ENCODE measurements at regions of chr2 and their contacts with region 1.

Region 1: DNA sequence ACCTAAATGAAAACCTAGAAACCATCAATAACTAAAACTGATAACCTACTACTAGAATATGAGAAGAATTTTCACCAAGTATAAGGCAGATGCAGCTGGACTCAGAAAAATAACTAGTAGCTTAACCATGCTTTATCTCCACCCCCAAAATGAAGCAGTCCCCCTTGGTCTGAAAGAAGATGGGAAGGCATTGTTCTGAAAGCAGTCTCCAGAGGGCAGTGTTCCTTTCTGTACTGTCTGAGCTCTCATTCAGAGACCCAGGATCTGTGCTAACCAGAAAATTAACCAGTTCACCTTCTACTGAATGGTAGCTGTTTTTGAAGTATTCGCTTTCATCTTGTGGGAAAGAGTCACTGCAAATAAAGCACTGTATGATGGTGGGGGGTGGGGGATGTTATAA is 273.0 kb downstream of the PDE11A start:
- DNase-seq: peak in 1 of 2 donors; percentile 6
- ATAC-seq: peak in 4 of 8 donors; percentile 61 to 66 (median 64)
- H3K4me3 ChIP-seq: no peak overlapping the region
- H3K27ac ChIP-seq: no peak overlapping the region
- H3K4me1 ChIP-seq: peaks cover 0 to 24% (median 7%) of the 10 kb centered on the region in 9 donors
- H3K27me3 ChIP-seq: peaks cover 0 to 8% (median 0%) of the 10 kb centered on the region in 7 donors
- CTCF ChIP-seq: peak in 8 of 9 donors; percentile 9 to 62 (median 28)

Region 2: DNA sequence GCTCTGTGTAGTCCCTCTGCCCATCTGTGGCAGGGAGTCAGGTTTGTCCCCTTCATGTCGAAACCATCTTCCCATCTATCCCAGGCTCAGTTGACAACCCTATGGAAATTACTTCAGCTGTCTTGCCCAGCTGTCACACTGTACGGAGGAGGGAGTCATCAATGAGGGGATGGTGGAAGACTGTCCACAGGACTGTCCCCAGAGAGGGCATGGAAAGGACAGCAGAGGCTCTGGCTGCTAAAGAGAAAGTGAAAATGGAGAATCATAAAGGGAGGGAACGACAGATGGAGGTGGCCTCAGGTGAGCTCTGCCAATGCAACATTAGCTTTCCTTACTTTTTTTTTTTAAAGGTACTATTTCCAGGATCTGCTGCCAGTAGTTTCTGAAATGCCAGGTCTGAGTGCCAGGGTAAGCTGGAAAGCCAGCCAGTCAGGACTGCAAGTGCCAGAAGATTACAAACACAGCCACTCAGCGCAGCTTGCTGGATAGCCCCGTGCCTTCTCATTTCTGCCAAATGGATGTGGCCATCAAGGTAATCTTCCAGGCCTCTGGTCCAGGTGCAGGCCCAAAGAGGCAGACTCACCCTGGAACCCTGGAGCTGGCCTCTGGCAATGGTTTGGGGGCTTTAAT is 214.2 kb before region 1 on chr2:
- intact Hi-C with region 1: no loop called
- DNase-seq: peak in 1 of 2 donors; percentile 30
- ATAC-seq: peak; percentile 61 to 92 (median 86)
- H3K4me3 ChIP-seq: no peak overlapping the region
- H3K27ac ChIP-seq: no peak overlapping the region
- H3K4me1 ChIP-seq: peaks cover 0 to 13% (median 0%) of the 10 kb centered on the region in 9 donors
- H3K27me3 ChIP-seq: no peaks in the 10 kb centered on the region
- CTCF ChIP-seq: no peak

Region 3: GRCh38 chr2:177842243-177842642 is 42.7 kb after region 1 on chr2:
- intact Hi-C with region 1: no loop called
- DNase-seq: no peak
- ATAC-seq: no peak
- H3K4me3 ChIP-seq: no peak overlapping the region
- H3K27ac ChIP-seq: no peak overlapping the region
- H3K4me1 ChIP-seq: no peaks in the 10 kb centered on the region
- H3K27me3 ChIP-seq: no peaks in the 10 kb centered on the region
- CTCF ChIP-seq: no peak

Region 4: DNA sequence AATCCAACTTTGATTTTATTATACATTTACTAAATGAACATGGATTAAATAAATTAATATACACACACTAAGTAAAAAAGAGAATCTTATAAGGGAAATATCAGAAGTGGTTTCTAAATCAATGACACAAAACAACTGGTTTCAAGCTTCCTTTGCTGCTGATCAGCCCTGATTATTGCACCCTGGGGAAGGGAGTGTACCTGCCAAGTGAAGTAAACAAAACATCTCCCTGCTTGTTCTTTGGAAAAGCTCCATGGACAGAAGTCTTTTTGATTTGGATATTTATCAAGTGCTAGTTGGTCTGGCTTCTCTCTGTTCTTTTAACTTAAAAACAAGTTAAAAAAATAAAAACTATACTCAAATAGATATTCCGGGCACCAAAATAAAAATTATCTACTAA is 83.0 kb after region 1 on chr2:
- intact Hi-C with region 1: loop called in 1 of 10 experiments (anchors 5 kb)
- DNase-seq: no peak
- ATAC-seq: peak in 1 of 8 donors; percentile 81
- H3K4me3 ChIP-seq: no peak overlapping the region
- H3K27ac ChIP-seq: peak overlapping the region in 2 of 10 donors; percentile 3 to 66
- H3K4me1 ChIP-seq: peaks cover 0 to 20% (median 0%) of the 10 kb centered on the region in 9 donors
- H3K27me3 ChIP-seq: no peaks in the 10 kb centered on the region
- CTCF ChIP-seq: no peak

Region 5: DNA sequence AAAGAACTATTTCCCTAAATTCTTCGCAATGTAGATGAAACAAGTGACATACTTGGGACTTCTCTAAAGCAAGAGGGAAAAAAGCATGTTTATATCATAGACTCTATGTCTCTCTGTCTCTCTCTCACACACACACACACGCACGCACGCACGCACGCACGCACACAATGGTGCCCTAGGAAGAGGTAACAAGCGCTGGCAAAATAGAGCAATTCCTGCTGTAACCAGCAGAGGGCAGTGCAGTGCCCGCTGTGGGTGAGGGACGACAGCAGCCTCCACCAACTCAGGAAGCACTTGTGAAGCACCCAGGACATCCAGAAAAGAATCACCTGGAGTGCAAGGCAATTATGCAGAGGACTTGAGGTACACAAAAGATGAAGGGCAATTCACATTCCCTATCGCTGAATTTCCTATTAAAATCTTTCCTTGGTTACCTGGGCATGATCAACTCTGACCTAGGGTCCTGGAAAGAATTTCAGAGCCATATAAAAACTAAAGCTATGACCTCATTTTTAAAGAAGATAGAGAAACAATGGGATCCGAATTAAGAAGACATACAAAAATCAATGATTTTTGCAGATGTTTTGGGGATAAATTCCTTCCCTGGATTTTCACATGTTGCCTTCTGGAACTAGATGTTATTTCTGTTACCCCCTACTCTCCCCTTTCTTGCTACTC is 106.6 kb after region 1 on chr2:
- intact Hi-C with region 1: loop called in 1 of 10 experiments (anchors 10 kb)
- DNase-seq: peak in 1 of 2 donors; percentile 32
- ATAC-seq: peak in 1 of 8 donors; percentile 59
- H3K4me3 ChIP-seq: no peak overlapping the region
- H3K27ac ChIP-seq: no peak overlapping the region
- H3K4me1 ChIP-seq: peaks cover 0 to 20% (median 7%) of the 10 kb centered on the region in 9 donors
- H3K27me3 ChIP-seq: no peaks in the 10 kb centered on the region
- CTCF ChIP-seq: peak; percentile 32 to 83 (median 68)

Region 6: DNA sequence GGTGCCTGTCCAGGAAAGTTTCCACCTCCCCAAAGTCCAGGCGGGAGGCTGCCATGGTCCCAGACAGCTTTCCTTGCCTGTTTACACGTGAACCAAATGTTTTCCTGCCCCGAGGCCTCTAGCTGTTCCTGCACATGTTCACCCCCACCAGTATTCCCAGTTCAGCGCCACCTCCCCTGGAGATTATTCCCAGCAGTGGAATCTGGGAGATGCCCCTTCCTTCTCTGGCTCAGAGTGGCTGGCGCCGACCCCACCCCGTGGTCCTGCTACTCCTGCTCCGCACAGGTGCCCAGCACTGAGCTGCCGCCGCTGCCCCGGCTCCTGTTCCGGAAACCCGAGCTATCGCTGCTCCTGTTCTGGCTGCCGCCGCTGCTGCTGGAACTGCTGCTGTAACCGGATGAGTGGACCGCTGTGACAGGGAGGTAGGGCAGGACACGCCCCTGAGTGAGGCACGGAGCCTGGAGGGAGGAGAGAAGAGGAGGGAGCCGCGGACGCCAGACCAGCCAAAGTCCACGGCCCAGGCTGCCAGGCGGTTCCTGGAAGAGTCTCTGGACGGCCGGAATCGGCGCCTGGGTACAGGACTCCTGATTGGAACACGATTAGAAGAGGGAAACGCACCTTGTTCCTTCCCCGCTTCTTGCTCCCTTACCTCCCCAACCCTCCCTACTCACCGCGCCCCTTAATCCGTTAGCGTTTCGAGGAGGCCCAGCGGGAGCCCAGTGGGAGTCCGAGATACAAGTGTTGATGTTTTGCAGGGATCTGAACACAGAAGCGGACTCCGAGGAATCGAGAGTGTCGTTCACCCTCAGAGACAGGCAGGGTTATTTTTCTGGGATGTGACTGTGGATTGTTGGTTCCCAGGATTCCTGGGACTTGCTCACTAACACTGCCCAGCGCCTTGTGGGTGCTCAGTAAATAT is 273.1 kb after region 1 on chr2 and contains the start of gene PDE11A:
- intact Hi-C with region 1: loop called in 3 of 10 experiments (anchors 5 to 10 kb)
- DNase-seq: peak; percentile 56 to 75
- ATAC-seq: peak; percentile 89 to 98 (median 95)
- H3K4me3 ChIP-seq: peak within 1 kb of the TSS; percentile 5 to 57 (median 48)
- H3K27ac ChIP-seq: peak within 1 kb of the TSS in 5 of 10 donors; percentile 13 to 66 (median 48)
- H3K4me1 ChIP-seq: peaks cover 0 to 16% (median 9%) of the 10 kb centered on the region in 9 donors
- H3K27me3 ChIP-seq: peaks cover 0 to 41% (median 13%) of the 10 kb centered on the region in 7 donors
- CTCF ChIP-seq: no peak
- total RNA-seq, gene PDE11A: 0.57 to 6.4 (median 1.1) TPM

Measured in heart right ventricle (tissue), 16 donors.